ENCODE measurements at regions of chr7 and their contacts with region 1.

Region 1: GRCh38 chr7:99910976-99911375 is 8.4 kb downstream of the TRIM4 start:
- DNase-seq: no peak
- ATAC-seq: no peak

Region 2: GRCh38 chr7:100132697-100133151 is 221.7 kb after region 1 on chr7:
- intact Hi-C with region 1: loop called (anchors 5 kb)
- DNase-seq: no peak
- ATAC-seq: peak; percentile 53

Measured in Right ventricle myocardium inferior (tissue), 1 donor.